GM10248 (cell line): ENCODE measurements at regions of chr17 and their contacts with region 1.

Region 1: GRCh38 chr17:20009302-20010098 is at the start of gene SPECC1:
- DNase-seq: peak; percentile 93
- CTCF ChIP-seq: peak; percentile 91

Region 2: GRCh38 chr17:19876529-19877161 is 132.9 kb before region 1 on chr17:
- CTCF ChIA-PET with region 1: no interaction called
- POLR2A ChIA-PET with region 1: no interaction called
- DNase-seq: no peak
- CTCF ChIP-seq: no peak

Region 3: DNA sequence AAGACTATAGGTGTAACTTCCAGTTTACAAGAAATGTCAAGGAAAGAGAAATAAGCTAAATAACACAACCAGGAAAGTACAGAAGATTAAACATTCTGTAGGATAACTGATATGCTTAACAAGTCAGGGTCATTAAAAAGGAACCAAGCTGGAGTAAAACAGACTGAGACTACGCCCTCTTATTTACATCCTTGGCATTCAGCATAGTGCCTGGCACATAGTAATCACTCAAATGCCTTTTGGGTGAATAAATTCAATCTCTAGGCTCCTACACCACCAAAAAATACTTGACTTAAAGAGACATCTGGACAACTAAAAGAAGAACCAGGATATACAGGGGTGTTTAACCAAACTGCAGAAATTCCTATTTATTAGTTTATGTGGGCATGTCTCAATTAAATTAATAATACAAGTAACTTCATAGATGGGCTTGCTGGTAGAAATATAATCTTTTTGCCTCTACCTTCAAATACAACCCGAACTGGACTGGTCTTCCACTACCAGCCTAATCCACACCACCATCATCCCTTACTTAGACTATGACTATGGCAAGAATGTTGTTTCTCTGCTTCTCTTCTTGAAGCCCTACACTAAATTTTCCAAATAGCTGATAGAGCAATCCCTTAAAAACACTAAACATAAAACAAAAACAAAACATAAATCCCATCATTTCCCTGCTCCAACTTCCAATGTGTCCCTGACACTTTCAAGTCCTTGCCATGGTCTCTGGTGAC is 94.1 kb before region 1 on chr17:
- CTCF ChIA-PET with region 1: no interaction called
- POLR2A ChIA-PET with region 1: no interaction called
- DNase-seq: no peak
- CTCF ChIP-seq: no peak

Region 4: GRCh38 chr17:19958023-19958422 is 51.5 kb before region 1 on chr17:
- CTCF ChIA-PET with region 1: no interaction called
- POLR2A ChIA-PET with region 1: no interaction called
- DNase-seq: no peak
- CTCF ChIP-seq: no peak

Region 5: DNA sequence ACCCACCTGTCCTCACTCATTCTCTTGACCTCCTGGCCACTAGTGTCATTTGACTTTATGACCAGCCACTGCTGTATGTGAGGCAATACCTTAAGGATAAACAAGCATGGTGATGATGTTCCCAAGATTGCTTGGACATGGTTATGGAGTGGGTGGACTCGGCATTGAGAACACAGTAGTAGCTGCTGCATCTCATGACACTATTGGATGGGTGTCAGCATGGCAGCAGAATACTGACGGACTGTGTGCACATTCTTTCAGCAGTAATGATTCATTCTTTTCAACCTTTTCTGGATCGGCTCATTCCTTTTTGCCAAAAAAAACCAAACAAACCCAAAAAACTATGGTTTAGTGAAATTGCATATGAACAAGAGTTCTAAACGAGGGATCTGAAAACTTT is 13.2 kb after region 1 on chr17:
- CTCF ChIA-PET with region 1: interaction called, 17 read pairs
- POLR2A ChIA-PET with region 1: no interaction called
- DNase-seq: no peak
- CTCF ChIP-seq: no peak

Region 6: GRCh38 chr17:20300436-20300934 is 291.0 kb after region 1 on chr17:
- CTCF ChIA-PET with region 1: no interaction called
- POLR2A ChIA-PET with region 1: no interaction called
- DNase-seq: no peak
- CTCF ChIP-seq: no peak